K562 (cell line): ENCODE measurements at regions of chr9 and their contacts with region 1.

Region 1: GRCh38 chr9:101530077-101530711 is 3.5 kb upstream of the RNF20 start:
- DNase-seq: peak; percentile 62 to 83 (median 78)
- ATAC-seq: peak; percentile 73
- H3K4me3 ChIP-seq: no peak overlapping the region
- H3K27ac ChIP-seq: no peak overlapping the region
- H3K4me1 ChIP-seq: peaks cover 0 to 4% of the 10 kb centered on the region in 2 experiments; a peak in 1 of 5 replicates
- H3K27me3 ChIP-seq: peaks cover 0 to 3% of the 10 kb centered on the region in 2 experiments; a peak in 1 of 5 replicates
- CTCF ChIP-seq: peak; percentile 74 to 84 (median 82)
- EP300 ChIP-seq: no peak
- POLR2A ChIP-seq: no peak
- RAD21 ChIP-seq: peak; percentile 86 to 87

Region 2: GRCh38 chr9:101119206-101119819 is 410.9 kb before region 1 on chr9:
- CTCF ChIA-PET with region 1: no interaction called
- POLR2A ChIA-PET with region 1: no interaction called
- in situ Hi-C with region 1: no loop called
- intact Hi-C with region 1: loop called (anchors 5 kb)
- DNase-seq: peak; percentile 29 to 47 (median 38)
- ATAC-seq: peak; percentile 88
- H3K4me3 ChIP-seq: no peak overlapping the region
- H3K27ac ChIP-seq: no peak overlapping the region
- H3K4me1 ChIP-seq: no peaks in the 10 kb centered on the region
- H3K27me3 ChIP-seq: no peaks in the 10 kb centered on the region
- CTCF ChIP-seq: peak; percentile 54 to 70 (median 54)
- EP300 ChIP-seq: no peak
- POLR2A ChIP-seq: no peak
- RAD21 ChIP-seq: peak; percentile 34 to 61

Region 3: DNA sequence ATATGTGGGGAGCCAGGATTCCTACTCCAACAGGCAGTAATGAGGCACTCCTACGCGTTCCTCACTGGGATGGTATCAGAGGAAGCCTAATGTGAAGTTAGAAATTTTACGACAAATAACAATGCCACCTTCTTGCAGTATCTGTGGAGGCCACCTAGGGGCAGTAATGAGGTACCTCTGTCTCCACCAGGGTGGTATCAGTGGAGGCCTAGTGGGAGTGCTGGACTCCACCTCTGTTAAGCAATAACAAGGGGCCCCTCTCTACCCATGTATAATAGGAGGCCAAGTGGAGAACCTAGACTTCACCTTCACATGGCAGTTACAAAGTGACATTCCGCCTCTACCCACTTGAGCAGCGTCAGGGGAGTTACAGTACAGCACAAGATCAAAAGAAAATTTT is 353.8 kb before region 1 on chr9:
- CTCF ChIA-PET with region 1: no interaction called
- POLR2A ChIA-PET with region 1: no interaction called
- in situ Hi-C with region 1: no loop called
- intact Hi-C with region 1: no loop called
- DNase-seq: peak in 3 of 4 experiments; percentile 6 to 15 (median 8)
- ATAC-seq: no peak
- H3K4me3 ChIP-seq: no peak overlapping the region
- H3K27ac ChIP-seq: no peak overlapping the region
- H3K4me1 ChIP-seq: no peaks in the 10 kb centered on the region
- H3K27me3 ChIP-seq: no peaks in the 10 kb centered on the region
- CTCF ChIP-seq: peak in 2 of 3 experiments; percentile 9 to 28; a peak in 1 of 6 replicates
- EP300 ChIP-seq: no peak
- POLR2A ChIP-seq: no peak
- RAD21 ChIP-seq: no peak

Region 4: DNA sequence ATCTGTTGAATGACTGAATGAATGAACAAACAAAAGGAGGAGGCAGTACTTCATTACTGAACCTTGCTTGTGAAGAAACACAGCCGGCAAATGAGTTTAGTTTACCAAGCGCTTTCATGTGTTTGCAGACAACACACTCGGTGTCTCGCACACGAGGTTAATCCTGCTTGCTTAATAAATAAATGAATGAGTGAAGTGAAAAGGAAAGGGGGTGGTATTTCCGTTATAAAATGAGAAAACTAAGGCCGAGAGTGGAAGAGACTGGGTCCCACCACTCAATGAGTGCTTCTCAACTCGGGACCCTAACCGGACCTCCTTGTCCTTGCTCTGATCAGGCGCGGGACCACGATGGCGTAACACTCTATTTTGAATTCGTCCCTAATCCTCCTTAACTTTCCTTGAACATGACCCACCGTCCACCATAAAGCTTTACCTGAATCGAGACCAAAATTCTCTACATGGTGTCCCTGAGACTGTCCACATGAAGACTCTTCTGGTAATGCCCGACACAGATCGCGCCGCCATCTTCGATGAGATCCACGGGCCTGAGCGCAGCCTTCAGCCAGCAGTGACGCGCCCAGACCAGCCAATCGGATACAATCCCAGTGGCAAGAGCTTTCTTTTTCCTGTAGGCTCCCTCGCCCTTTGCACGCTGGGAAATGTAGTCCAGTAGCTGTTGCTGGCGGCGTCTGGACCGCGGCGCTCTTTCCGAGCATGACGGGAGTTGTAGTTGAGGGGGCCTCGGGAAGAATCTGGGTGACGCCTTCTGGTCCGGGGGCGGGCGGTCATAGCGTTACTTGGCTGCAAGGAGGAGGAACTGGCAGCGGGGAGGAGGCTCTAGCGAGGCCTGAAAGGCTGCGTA is 131.9 kb before region 1 on chr9 and contains the starts of genes MRPL50 and ZNF189:
- CTCF ChIA-PET with region 1: no interaction called
- POLR2A ChIA-PET with region 1: interaction called, 5 read pairs
- in situ Hi-C with region 1: no loop called
- intact Hi-C with region 1: loop called (anchors 2 kb)
- DNase-seq: peak; percentile 88 to 98 (median 92)
- ATAC-seq: peak; percentile 97
- H3K4me3 ChIP-seq: peak within 1 kb of the TSS; percentile 79
- H3K27ac ChIP-seq: peak within 1 kb of the TSS; percentile 96
- H3K4me1 ChIP-seq: peaks cover 11 to 17% of the 10 kb centered on the region in 2 experiments; a peak in 3 of 5 replicates
- H3K27me3 ChIP-seq: no peaks in the 10 kb centered on the region
- CTCF ChIP-seq: 0 out of 6 replicates have a peak, but pooled peaks of 1 of the 3 experiments have one; percentile 13
- EP300 ChIP-seq: no peak
- POLR2A ChIP-seq: peak; percentile 98
- RAD21 ChIP-seq: no peak
- polyA plus RNA-seq, gene MRPL50: 80.1 to 107 TPM
- polyA plus RNA-seq, gene ZNF189: 2.4 to 3.5 TPM

Region 5: GRCh38 chr9:101458955-101459631 is 71.1 kb before region 1 on chr9:
- CTCF ChIA-PET with region 1: interaction called, 30 read pairs
- POLR2A ChIA-PET with region 1: interaction called, 3 read pairs
- in situ Hi-C with region 1: no loop called
- intact Hi-C with region 1: loop called (anchors 1 kb)
- DNase-seq: peak in 3 of 4 experiments; percentile 18 to 70 (median 43)
- ATAC-seq: peak; percentile 92
- H3K4me3 ChIP-seq: no peak overlapping the region
- H3K27ac ChIP-seq: no peak overlapping the region
- H3K4me1 ChIP-seq: peaks cover 0 to 15% of the 10 kb centered on the region in 2 experiments; a peak in 3 of 5 replicates
- H3K27me3 ChIP-seq: no peaks in the 10 kb centered on the region
- CTCF ChIP-seq: peak; percentile 70 to 82 (median 75)
- EP300 ChIP-seq: no peak
- POLR2A ChIP-seq: no peak
- RAD21 ChIP-seq: peak; percentile 78 to 82

Region 6: GRCh38 chr9:101705135-101705661 is 175.0 kb after region 1 on chr9:
- CTCF ChIA-PET with region 1: no interaction called
- POLR2A ChIA-PET with region 1: no interaction called
- in situ Hi-C with region 1: no loop called
- intact Hi-C with region 1: no loop called
- DNase-seq: no peak
- ATAC-seq: peak; percentile 31; the same call in 1 of the 3 replicates
- H3K4me3 ChIP-seq: no peak overlapping the region
- H3K27ac ChIP-seq: no peak overlapping the region
- H3K4me1 ChIP-seq: no peaks in the 10 kb centered on the region
- H3K27me3 ChIP-seq: no peaks in the 10 kb centered on the region
- CTCF ChIP-seq: no peak
- EP300 ChIP-seq: no peak
- POLR2A ChIP-seq: no peak
- RAD21 ChIP-seq: no peak

Region 7: DNA sequence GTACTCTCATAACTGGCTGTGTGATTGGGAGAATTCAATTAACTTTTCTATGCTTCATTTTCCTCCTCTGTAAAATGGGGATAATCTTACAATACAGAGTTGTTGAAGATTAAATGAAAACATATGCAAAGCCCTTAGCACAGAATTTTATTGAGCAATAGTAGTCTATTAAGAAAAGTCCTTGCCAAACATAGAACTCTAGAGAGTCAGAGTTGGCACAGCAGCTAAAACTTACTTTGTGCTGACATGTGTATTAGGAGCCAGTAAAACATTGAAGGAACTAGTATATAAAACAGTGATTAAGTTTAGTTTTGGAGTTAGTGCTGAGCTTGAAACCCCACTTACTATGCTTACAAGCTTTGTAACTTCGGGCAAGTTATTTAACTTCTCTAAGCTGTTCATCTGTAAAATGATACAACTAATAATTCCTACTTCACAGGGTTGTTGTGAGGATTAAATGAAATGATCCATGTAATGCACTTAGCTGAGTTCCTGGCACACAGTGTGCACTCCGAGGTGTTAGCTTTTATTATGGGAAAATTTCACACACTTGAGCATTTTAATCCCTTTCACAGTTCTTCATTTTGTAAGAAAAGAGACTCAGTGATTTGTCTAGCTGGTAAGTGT is 228.2 kb after region 1 on chr9:
- CTCF ChIA-PET with region 1: no interaction called
- POLR2A ChIA-PET with region 1: no interaction called
- in situ Hi-C with region 1: no loop called
- intact Hi-C with region 1: no loop called
- DNase-seq: no peak
- ATAC-seq: no peak
- H3K4me3 ChIP-seq: no peak overlapping the region
- H3K27ac ChIP-seq: no peak overlapping the region
- H3K4me1 ChIP-seq: no peaks in the 10 kb centered on the region
- H3K27me3 ChIP-seq: no peaks in the 10 kb centered on the region
- CTCF ChIP-seq: no peak
- EP300 ChIP-seq: no peak
- POLR2A ChIP-seq: no peak
- RAD21 ChIP-seq: no peak